B cell (primary cell): ENCODE measurements at regions of chr10 and their contacts with region 1.

Region 1: GRCh38 chr10:132446661-132447194 is 49.7 kb downstream of the PWWP2B start:
- DNase-seq: peak; percentile 78
- ATAC-seq: peak; percentile 48
- H3K4me3 ChIP-seq: peak overlapping the region in 2 of 5 experiments; percentile 12 to 30
- H3K4me3 Mint-ChIP-seq: peak overlapping the region; percentile 68
- H3K27ac ChIP-seq: peak overlapping the region; percentile 72 to 89
- H3K27ac Mint-ChIP-seq: peak overlapping the region; percentile 92
- H3K4me1 ChIP-seq: peaks cover 35 to 58% of the 10 kb centered on the region in 2 donors
- H3K4me1 Mint-ChIP-seq: peaks cover 51% of the 10 kb centered on the region
- H3K27me3 ChIP-seq: no peaks in the 10 kb centered on the region
- H3K27me3 Mint-ChIP-seq: no peaks in the 10 kb centered on the region
- CTCF ChIP-seq: peak; percentile 54

Region 2: DNA sequence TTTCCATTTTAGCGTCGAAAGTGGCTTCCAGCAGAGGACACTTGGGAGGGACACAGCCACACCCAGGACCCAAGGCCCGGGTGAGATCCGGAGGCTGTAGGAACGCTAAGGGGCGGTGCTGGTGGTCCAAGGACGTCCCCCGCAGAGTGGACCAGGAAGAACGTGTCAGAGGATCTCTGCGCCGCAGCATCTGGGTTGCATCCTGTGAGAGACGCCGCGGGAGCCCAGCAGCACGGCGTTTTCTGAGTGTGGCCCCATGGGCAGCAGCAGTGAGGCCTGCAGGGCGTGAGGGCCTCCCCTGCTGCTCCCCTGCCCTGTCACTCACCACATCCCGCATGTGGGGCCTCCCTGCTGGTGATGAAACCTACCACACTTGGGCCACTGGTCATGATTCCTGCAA is 424.5 kb before region 1 on chr10:
- CTCF ChIA-PET with region 1: no interaction called
- POLR2A ChIA-PET with region 1: no interaction called
- intact Hi-C with region 1: no loop called
- DNase-seq: no peak
- ATAC-seq: no peak
- H3K4me3 ChIP-seq: no peak overlapping the region
- H3K4me3 Mint-ChIP-seq: no peak overlapping the region
- H3K27ac ChIP-seq: no peak overlapping the region
- H3K27ac Mint-ChIP-seq: no peak overlapping the region
- H3K4me1 ChIP-seq: peaks cover 0 to 7% of the 10 kb centered on the region in 2 donors
- H3K4me1 Mint-ChIP-seq: peaks cover 5% of the 10 kb centered on the region
- H3K27me3 ChIP-seq: peaks cover 0 to 7% (median 3%) of the 10 kb centered on the region in 4 experiments
- H3K27me3 Mint-ChIP-seq: peaks cover 26% of the 10 kb centered on the region
- CTCF ChIP-seq: no peak

Region 3: GRCh38 chr10:132387764-132388210 is 58.9 kb before region 1 on chr10:
- CTCF ChIA-PET with region 1: interaction called, 11 read pairs
- POLR2A ChIA-PET with region 1: interaction called, 3 read pairs
- intact Hi-C with region 1: no loop called
- DNase-seq: peak; percentile 89
- ATAC-seq: peak; percentile 95
- H3K4me3 ChIP-seq: peak overlapping the region in 4 of 5 experiments; percentile 16 to 47 (median 28)
- H3K4me3 Mint-ChIP-seq: peak overlapping the region; percentile 85
- H3K27ac ChIP-seq: peak overlapping the region; percentile 66 to 72
- H3K27ac Mint-ChIP-seq: peak overlapping the region; percentile 91
- H3K4me1 ChIP-seq: peaks cover 6 to 21% of the 10 kb centered on the region in 2 donors
- H3K4me1 Mint-ChIP-seq: peaks cover 9% of the 10 kb centered on the region
- H3K27me3 ChIP-seq: no peaks in the 10 kb centered on the region
- H3K27me3 Mint-ChIP-seq: no peaks in the 10 kb centered on the region
- CTCF ChIP-seq: peak; percentile 56

Region 4: DNA sequence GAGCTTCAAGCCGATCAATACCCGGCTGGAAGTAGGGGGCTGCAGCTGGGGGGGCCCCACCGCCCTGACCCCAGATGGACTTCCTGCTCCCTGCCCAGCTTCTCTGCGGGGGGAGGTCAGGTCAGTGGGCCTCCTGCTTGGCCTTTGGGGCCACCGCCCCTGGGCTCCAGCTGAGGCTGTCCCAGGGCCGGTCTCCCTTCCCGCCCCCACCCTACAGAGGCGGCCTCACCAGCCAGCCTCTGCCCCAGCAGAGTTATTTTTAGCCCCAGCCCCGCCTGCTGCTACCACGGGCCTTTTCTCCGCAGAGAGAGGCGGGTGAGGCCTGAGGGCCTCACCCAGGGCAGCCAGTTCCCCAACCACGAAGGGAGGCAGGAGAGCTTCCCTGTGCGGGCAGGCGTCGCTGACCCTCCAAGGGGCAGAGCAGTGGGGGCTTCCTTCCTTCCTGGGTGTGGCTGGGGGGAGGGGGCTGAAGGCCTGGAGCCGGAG is 25.3 kb before region 1 on chr10:
- CTCF ChIA-PET with region 1: interaction called, 29 read pairs
- POLR2A ChIA-PET with region 1: interaction called, 21 read pairs
- intact Hi-C with region 1: loop called (anchors 1 kb)
- DNase-seq: peak; percentile 75
- ATAC-seq: peak; percentile 29
- H3K4me3 ChIP-seq: peak overlapping the region in 4 of 5 experiments; percentile 17 to 46 (median 24)
- H3K4me3 Mint-ChIP-seq: peak overlapping the region; percentile 79
- H3K27ac ChIP-seq: peak overlapping the region; percentile 92 to 99
- H3K27ac Mint-ChIP-seq: peak overlapping the region; percentile 94
- H3K4me1 ChIP-seq: peaks cover 72 to 76% of the 10 kb centered on the region in 2 donors
- H3K4me1 Mint-ChIP-seq: peaks cover 59% of the 10 kb centered on the region
- H3K27me3 ChIP-seq: no peaks in the 10 kb centered on the region
- H3K27me3 Mint-ChIP-seq: no peaks in the 10 kb centered on the region
- CTCF ChIP-seq: no peak

Region 5: DNA sequence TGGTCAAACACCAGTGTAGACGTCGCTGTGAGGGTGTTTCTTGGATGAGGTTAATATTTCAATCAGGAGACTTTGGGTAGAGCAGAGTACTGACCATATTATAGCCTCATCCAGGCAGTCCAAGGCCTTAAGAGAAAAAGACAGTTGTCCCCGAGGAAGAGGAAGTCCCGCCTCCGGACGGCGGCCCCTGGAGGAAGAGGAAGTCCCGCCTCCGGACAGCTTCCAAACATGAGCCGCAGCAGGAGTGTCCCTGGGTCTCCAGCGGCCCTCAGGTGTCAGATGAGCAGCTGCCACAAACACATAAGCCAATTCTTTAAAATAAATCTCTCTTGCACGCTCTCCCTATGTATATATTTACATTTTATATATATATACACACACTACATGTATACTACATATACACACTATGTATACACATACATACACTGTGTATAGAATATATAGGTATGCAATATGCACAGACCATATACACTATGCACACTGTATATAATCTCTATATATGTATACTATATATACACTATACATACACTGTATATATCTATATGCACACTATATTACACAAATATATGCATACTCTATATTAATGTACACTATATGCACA is 12.2 kb before region 1 on chr10:
- CTCF ChIA-PET with region 1: interaction called, 10 read pairs
- POLR2A ChIA-PET with region 1: interaction called, 8 read pairs
- intact Hi-C with region 1: no loop called
- DNase-seq: peak; percentile 72
- ATAC-seq: peak; percentile 61
- H3K4me3 ChIP-seq: peak overlapping the region in 2 of 5 experiments; percentile 27 to 31
- H3K4me3 Mint-ChIP-seq: peak overlapping the region; percentile 61
- H3K27ac ChIP-seq: no peak overlapping the region
- H3K27ac Mint-ChIP-seq: peak overlapping the region; percentile 74
- H3K4me1 ChIP-seq: peaks cover 16 to 33% of the 10 kb centered on the region in 2 donors
- H3K4me1 Mint-ChIP-seq: peaks cover 24% of the 10 kb centered on the region
- H3K27me3 ChIP-seq: no peaks in the 10 kb centered on the region
- H3K27me3 Mint-ChIP-seq: no peaks in the 10 kb centered on the region
- CTCF ChIP-seq: no peak